Activated naive CD4-positive, alpha-beta T cell treated with anti-CD3 and anti-CD28 coated beads, Interleukin-2, amount 10 ng/mL, durations not matched to agents 7 days and 5 days (primary cell): ENCODE measurements at regions of chr2 and their contacts with region 1.

Region 1: DNA sequence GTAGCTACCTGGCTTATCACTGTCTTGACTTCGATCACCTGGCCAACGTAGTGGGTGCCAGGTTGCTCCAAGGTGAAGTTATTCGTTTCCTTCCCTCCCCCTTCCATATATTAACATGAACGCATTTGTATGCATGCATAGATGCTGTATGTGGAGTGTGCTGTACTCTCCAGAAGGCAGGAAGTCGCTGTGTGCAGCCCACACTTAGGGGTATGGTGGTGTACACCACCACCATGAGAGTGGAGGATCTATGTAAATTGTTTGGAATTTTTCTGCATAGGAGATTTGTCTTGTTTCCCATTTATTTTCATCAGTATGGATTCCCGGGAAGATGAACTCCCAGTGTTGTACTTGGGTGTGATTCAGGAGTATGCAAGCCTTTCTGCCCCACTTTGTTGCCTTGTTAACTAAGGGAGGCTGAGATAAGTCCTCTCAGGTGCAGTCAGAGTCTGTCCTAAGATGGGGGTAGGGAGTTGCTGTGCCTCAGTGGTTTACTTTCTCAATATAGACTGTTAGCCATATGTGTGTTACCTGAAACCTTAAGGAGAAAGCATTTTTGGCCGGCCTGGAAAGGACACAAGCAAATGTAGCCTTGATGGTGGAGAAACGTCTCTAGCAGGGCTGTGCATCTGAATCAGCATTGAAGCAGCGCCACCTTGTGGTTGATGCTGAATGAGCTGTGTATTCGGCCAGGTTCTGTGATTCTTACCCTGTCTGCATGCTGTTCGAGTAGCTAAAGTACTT is 149.8 kb downstream of the TANC1 start:
- DNase-seq: peak; percentile 89
- H3K4me3 Mint-ChIP-seq: no peak overlapping the region
- H3K27ac Mint-ChIP-seq: no peak overlapping the region
- H3K4me1 Mint-ChIP-seq: peaks cover 6% of the 10 kb centered on the region
- H3K27me3 Mint-ChIP-seq: no peaks in the 10 kb centered on the region

Region 2: GRCh38 chr2:158903711-158904443 is 214.4 kb before region 1 on chr2:
- CTCF ChIA-PET with region 1: interaction called, 54 read pairs
- DNase-seq: no peak
- H3K4me3 Mint-ChIP-seq: no peak overlapping the region
- H3K27ac Mint-ChIP-seq: no peak overlapping the region
- H3K4me1 Mint-ChIP-seq: peaks cover 2% of the 10 kb centered on the region
- H3K27me3 Mint-ChIP-seq: peaks cover 11% of the 10 kb centered on the region

Region 3: DNA sequence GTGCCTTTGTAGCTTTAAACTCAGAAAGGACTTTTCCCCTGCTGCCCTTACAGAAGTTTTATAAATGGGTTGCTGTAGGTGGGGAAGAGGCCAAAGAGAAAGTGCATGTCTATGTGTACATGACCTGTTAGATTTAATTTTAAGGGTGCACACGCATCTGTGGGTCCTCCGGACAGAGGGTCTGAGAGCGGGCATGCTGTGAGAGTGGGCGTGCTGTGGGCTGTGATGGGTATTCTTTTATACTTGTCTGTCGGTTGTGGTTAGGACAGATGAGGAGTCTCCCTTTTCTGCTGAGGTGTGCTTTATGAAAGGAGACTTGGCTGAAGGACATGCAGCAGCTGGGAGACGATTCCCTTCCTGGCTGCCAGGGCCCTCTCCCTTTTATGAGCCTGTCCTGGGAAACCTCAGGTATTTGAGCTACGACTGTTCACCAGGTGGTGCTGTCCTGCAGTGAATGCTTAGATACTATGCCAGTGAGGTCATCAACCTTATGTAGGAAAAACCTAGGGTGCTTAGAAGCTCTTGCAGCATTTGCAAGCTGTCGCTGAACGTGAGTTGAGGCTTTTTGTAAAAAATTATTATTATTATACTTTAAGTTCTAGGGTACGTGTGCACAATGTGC is 82.4 kb before region 1 on chr2:
- CTCF ChIA-PET with region 1: interaction called, 28 read pairs
- DNase-seq: peak; percentile 56
- H3K4me3 Mint-ChIP-seq: no peak overlapping the region
- H3K27ac Mint-ChIP-seq: no peak overlapping the region
- H3K4me1 Mint-ChIP-seq: no peaks in the 10 kb centered on the region
- H3K27me3 Mint-ChIP-seq: peaks cover 3% of the 10 kb centered on the region

Region 4: GRCh38 chr2:159129824-159130223 is 11.5 kb after region 1 on chr2:
- CTCF ChIA-PET with region 1: interaction called, 10 read pairs
- DNase-seq: no peak
- H3K4me3 Mint-ChIP-seq: no peak overlapping the region
- H3K27ac Mint-ChIP-seq: no peak overlapping the region
- H3K4me1 Mint-ChIP-seq: peaks cover 16% of the 10 kb centered on the region
- H3K27me3 Mint-ChIP-seq: no peaks in the 10 kb centered on the region